ENCODE measurements at regions of chr7 and their contacts with region 1.

Region 1: DNA sequence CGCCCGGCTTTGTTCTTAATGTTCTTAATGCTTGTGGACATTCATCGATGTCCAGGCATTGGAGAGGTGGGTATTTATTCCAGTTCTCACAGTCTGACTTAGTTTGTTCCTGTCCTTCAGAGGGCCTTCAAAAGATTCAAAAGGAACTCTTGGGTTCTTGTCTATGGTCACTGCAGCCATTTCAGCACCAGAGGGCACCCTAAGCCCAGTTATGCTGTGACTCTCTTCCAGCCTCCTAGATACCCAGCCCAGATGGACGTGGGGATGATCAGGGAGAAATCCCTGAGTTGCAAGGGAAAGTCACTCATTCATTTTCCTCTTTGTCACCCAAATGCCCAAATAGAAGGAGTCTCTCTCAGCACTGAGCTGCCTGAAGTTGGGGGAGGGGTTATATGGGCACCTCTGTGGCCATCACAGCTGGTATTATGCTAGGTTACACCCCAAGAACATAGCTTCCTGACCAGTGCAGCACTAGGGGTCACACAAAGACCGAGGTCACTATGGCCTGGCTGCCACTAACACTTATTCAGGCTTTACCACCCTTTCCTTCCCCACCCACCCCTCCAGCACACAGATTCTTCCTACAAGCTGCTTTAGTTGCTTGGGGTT is 26.5 kb upstream of the CCDC126 start:
- DNase-seq: peak; percentile 23
- H3K4me3 ChIP-seq: no peak overlapping the region
- CTCF ChIP-seq: peak; percentile 77

Region 2: DNA sequence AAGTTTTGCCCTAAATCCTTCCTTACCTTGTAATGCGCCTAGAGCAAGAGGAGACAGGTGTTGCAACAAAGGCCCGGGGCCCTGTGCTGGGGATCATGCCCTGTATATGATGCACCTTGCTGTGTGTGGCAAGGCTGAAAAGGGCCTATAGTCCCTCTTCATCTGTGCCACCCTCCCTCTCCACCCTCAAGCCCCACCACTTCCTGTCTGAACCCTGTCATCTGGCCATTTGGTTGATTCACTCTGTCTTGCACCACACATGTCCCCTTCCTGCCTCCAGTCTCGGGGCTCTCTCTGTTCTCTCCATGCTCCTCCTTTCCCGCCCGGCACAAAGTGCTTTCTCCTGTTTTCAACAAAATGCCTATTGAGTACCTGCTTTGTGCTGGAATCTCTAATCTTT is 283.1 kb before region 1 on chr7:
- CTCF ChIA-PET with region 1: no interaction called
- POLR2A ChIA-PET with region 1: no interaction called
- DNase-seq: no peak
- H3K4me3 ChIP-seq: no peak overlapping the region
- CTCF ChIP-seq: no peak

Region 3: DNA sequence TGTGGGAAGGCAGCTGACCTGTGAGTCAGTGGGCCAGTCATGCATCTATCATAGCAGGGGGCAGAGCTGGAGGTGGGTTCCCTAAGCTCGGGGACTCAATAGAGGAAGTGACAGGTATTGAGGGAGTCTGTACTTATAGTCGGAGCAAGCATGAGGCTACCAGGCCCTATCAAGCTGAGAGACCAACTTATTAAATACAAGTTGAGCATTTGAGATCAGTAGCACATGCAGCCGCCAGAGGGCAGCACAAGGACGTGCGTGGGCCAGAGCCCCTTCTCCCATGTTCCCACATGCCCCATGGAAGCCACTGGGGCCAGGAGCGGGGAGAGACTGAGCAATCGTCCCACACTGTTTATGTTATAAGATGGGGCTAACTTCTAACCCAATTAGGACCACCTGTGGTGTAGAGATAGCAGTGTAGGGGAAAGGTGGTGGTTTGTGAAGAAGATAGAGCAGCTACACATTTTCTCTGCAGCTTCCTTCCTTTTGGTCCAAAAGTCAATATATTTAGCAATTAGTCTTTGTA is 126.3 kb after region 1 on chr7:
- CTCF ChIA-PET with region 1: interaction called, 31 read pairs
- POLR2A ChIA-PET with region 1: no interaction called
- DNase-seq: no peak
- H3K4me3 ChIP-seq: no peak overlapping the region
- CTCF ChIP-seq: peak; percentile 66

Region 4: GRCh38 chr7:23712368-23713284 is 141.9 kb after region 1 on chr7:
- CTCF ChIA-PET with region 1: interaction called, 217 read pairs
- POLR2A ChIA-PET with region 1: interaction called, 3 read pairs
- DNase-seq: peak; percentile 29
- H3K4me3 ChIP-seq: no peak overlapping the region
- CTCF ChIP-seq: no peak

Region 5: GRCh38 chr7:23833405-23833804 is 262.7 kb after region 1 on chr7:
- CTCF ChIA-PET with region 1: no interaction called
- POLR2A ChIA-PET with region 1: no interaction called
- DNase-seq: no peak
- H3K4me3 ChIP-seq: no peak overlapping the region
- CTCF ChIP-seq: no peak

Region 6: GRCh38 chr7:24010495-24010894 is 439.8 kb after region 1 on chr7:
- CTCF ChIA-PET with region 1: no interaction called
- POLR2A ChIA-PET with region 1: no interaction called
- DNase-seq: no peak
- H3K4me3 ChIP-seq: no peak overlapping the region
- CTCF ChIP-seq: no peak